Activated CD8-positive, alpha-beta T cell treated with anti-CD3 and anti-CD28 coated beads, Interleukin-2, amount 10 ng/mL, durations not matched to agents 7 days and 5 days (primary cell): ENCODE measurements at regions of chr10 and their contacts with region 1.

Region 1: DNA sequence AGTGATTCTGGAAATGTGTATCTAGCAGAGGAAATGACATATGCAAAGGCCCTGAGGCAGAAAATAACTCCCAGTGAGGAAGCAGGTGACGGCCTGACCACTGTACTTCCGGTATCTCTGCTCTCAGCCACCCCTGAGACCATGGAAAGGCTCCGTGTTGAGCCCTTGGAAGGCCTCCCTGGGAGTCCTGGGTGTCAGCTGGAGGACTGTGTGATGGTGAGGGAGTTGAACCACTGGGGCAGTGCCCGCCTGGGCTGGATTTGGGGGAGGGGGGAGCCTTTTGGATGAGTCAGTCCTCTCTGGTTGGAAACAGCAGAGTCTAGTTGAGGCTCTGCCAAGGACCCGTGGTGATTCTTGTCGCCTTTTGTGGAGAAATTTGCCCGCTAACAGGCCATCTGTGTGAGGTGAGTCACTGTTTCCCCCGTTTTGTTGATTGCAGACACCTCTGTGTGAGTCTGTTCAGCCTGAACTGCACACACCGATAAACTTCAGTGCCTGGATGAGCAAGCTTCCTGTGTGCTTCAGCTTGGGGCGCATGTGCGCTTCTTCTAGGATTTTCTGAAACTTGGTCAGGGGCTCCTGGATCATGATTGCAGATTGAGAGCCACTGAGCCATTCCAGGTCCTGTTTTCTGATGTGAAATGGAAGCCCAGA is 98.6 kb downstream of the GRK5 start:
- DNase-seq: peak; percentile 91
- ATAC-seq: peak; percentile 86
- H3K4me3 Mint-ChIP-seq: peak overlapping the region; percentile 80
- H3K27ac Mint-ChIP-seq: peak overlapping the region; percentile 100
- H3K4me1 Mint-ChIP-seq: peaks cover 78% of the 10 kb centered on the region
- H3K27me3 Mint-ChIP-seq: peaks cover 15% of the 10 kb centered on the region

Region 2: DNA sequence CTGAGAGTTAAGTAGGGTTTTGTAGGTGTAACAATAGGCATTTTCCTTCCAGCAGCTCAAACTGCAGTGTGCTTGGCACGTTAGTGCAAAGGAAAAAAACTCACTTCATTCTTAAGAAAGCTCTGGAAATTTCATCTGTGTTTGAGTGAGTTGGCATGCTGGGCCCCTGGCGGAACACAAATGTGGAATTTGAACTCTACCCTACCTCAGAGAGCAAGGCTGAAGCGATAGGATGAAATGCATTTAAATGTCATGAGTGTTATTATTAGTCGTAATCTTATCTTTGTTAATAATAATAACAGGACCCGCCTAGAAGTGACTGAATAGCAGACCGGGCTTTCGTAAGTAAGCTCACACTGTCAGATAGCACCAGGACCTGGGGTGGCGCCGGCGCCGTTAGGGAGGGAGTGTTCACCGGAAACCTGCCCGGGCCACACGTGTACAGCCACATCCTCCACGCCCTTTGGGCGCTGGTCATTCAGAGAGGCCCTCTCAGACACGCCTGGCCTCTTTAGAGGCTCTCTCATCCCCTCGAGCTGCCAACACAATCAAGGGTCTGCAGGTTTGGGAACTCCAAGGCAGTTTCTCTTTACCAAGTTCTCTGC is 35.1 kb before region 1 on chr10:
- CTCF ChIA-PET with region 1: interaction called, 10 read pairs
- POLR2A ChIA-PET with region 1: interaction called, 6 read pairs
- DNase-seq: peak; percentile 68
- ATAC-seq: peak; percentile 39
- H3K4me3 Mint-ChIP-seq: peak overlapping the region; percentile 22
- H3K27ac Mint-ChIP-seq: peak overlapping the region; percentile 78
- H3K4me1 Mint-ChIP-seq: peaks cover 67% of the 10 kb centered on the region
- H3K27me3 Mint-ChIP-seq: no peaks in the 10 kb centered on the region

Region 3: DNA sequence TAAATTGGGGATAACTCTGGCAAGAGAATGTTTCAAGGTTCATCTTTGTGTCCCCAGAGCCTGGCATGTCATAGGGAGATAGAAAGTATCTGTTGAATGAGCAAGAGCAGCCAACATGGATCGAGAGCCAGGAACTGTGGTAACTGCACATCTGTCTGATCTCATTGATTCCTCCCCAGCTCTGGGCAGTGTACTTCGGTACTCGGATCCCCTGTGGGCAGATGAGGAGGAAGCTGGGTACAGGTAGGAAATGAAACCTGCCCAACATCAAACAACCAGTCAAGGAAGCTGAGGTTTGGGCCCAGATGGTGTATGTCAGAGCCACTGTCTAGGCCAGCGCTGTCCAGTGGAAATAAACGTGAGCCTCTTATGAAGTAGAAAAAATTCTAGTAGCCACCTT is 22.2 kb before region 1 on chr10:
- CTCF ChIA-PET with region 1: interaction called, 18 read pairs
- POLR2A ChIA-PET with region 1: interaction called, 3 read pairs
- DNase-seq: peak; percentile 54
- ATAC-seq: peak; percentile 76
- H3K4me3 Mint-ChIP-seq: peak overlapping the region; percentile 32
- H3K27ac Mint-ChIP-seq: peak overlapping the region; percentile 72
- H3K4me1 Mint-ChIP-seq: peaks cover 60% of the 10 kb centered on the region
- H3K27me3 Mint-ChIP-seq: no peaks in the 10 kb centered on the region

Region 4: GRCh38 chr10:119290291-119291048 is 15.5 kb before region 1 on chr10:
- CTCF ChIA-PET with region 1: interaction called, 18 read pairs
- POLR2A ChIA-PET with region 1: interaction called, 4 read pairs
- DNase-seq: no peak
- ATAC-seq: no peak
- H3K4me3 Mint-ChIP-seq: no peak overlapping the region
- H3K27ac Mint-ChIP-seq: no peak overlapping the region
- H3K4me1 Mint-ChIP-seq: peaks cover 65% of the 10 kb centered on the region
- H3K27me3 Mint-ChIP-seq: peaks cover 2% of the 10 kb centered on the region

Region 5: DNA sequence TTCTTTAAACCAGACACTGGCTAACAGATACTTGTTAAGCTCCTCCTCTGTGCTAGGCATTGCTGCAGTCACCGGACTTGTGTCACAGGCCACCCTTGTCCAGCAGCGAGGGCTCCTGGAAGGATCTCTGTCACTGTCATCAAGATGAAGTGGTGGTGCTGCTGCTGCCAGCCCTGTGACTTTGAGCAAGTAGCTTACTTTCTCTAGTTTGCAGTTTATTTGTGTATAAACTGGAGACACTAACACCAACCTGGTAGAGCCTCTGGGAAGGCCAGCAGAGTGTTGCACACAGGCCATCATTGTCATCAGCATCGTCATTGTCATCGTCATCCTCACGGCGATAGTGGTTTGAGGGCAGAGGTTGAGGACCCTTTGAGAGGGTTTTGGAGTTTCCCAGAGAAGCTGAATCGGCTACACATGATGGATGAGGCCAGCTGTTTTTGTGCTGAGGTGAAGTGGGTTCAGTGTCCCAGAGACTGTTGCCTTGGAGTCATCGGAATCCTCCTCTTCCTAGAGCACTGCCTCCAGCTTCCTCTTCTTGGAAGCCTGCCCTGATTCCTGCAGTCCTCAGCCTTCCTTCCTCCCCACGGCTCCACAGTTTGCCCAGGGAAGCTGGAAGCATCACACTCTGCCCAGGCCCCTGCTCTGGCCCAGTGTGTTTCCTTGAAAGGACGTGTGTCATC is 29.8 kb after region 1 on chr10:
- CTCF ChIA-PET with region 1: no interaction called
- POLR2A ChIA-PET with region 1: no interaction called
- DNase-seq: no peak
- ATAC-seq: no peak
- H3K4me3 Mint-ChIP-seq: no peak overlapping the region
- H3K27ac Mint-ChIP-seq: no peak overlapping the region
- H3K4me1 Mint-ChIP-seq: peaks cover 24% of the 10 kb centered on the region
- H3K27me3 Mint-ChIP-seq: no peaks in the 10 kb centered on the region